ENCODE measurements at regions of chr10 and their contacts with region 1.

Region 1: DNA sequence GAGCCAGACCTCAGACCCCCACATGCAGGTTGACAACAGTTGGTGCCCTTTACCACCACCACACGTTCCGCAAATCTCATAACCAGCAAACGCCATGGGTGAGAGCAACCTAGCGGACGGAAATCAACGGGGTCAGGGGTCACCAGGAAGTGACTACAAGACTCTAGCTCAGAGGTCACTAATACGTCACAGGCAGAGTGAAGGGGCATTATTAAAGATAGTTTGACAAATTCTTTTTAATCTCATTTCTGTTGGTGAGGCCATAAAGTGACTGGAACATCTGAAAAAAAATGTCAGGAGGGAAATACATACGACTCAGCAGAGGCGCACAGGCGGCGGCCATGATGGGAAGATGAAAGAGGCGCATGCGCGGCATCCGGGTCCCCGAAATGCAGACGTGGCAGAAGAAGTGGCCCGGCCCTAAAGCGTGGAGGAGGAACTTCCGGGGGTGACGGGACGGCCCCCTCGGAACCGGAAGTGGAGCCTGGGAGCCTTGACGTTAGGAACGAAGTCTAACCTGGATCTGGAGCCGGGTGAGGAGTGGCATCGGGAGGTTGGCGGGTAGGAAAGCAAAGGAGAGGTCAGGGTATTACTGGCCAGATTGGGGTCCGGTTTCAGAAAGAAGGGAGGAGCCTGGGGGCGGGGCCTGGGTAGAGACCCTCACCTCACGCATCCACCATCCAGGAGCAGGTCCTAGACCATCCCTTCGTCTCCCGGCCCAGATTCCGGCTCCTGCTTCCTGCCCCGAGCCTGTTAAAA is at the start of gene SEC24C:
- DNase-seq: peak; percentile 99
- ATAC-seq: peak; percentile 94
- H3K4me3 ChIP-seq: peak within 1 kb of the TSS; percentile 89 to 99 (median 95)
- H3K4me3 Mint-ChIP-seq: peak within 1 kb of the TSS; percentile 100
- H3K27ac ChIP-seq: peak within 1 kb of the TSS; percentile 88 to 99
- H3K27ac Mint-ChIP-seq: peak within 1 kb of the TSS; percentile 100
- H3K4me1 ChIP-seq: peaks cover 18 to 24% of the 10 kb centered on the region in 2 donors
- H3K4me1 Mint-ChIP-seq: peaks cover 35% of the 10 kb centered on the region
- H3K27me3 ChIP-seq: no peaks in the 10 kb centered on the region
- H3K27me3 Mint-ChIP-seq: no peaks in the 10 kb centered on the region
- CTCF ChIP-seq: no peak
- total RNA-seq, gene SEC24C: 78.7 and 80.5 TPM in 2 replicates

Region 2: DNA sequence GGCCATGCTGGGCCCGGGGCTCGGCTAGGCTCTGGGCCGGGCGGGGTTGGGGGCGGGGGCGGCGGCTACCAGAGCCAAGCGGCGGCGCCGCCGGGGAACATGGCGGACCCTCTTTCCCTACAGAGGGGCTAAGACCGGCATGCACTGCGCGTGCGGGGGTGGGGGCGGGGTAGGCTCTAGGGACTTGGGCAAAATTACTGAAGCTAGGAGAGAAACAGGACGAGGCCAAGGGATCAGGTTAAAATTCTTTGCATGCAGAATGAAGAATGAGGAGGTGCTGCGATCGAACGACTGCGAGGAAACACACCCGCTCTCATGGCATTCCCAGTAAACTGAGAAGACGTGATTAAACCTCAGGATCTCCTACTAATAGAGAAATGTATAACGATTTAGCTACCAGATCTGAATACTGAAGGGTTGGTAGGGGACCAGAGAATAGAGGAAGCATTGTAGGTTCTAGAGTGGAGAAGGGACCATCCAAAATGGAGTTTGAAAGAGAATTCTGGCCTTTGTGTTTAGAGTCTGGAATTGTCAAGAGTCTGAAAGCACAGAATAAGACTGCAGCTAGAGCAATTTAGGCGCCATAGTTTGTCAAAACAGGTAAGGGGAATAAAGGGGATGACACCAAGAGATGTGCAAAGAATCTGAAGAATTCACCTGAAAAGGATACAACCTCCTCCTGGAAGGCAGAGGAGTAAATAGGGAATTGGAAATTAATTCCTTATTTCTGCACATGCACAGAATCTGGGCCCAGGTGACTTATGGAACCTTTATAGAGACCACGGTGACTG is 248.0 kb before region 1 on chr10 and contains the start of gene PPP3CB:
- CTCF ChIA-PET with region 1: no interaction called
- POLR2A ChIA-PET with region 1: no interaction called
- intact Hi-C with region 1: loop called (anchors 1 kb)
- DNase-seq: peak; percentile 94
- ATAC-seq: peak; percentile 70
- H3K4me3 ChIP-seq: peak within 1 kb of the TSS; percentile 63 to 97 (median 85)
- H3K4me3 Mint-ChIP-seq: peak within 1 kb of the TSS; percentile 94
- H3K27ac ChIP-seq: peak within 1 kb of the TSS; percentile 89 to 93
- H3K27ac Mint-ChIP-seq: peak within 1 kb of the TSS; percentile 96
- H3K4me1 ChIP-seq: peaks cover 30 to 40% of the 10 kb centered on the region in 2 donors
- H3K4me1 Mint-ChIP-seq: peaks cover 52% of the 10 kb centered on the region
- H3K27me3 ChIP-seq: no peaks in the 10 kb centered on the region
- H3K27me3 Mint-ChIP-seq: no peaks in the 10 kb centered on the region
- CTCF ChIP-seq: no peak
- total RNA-seq, gene PPP3CB: 51.2 and 52.8 TPM in 2 replicates

Region 3: DNA sequence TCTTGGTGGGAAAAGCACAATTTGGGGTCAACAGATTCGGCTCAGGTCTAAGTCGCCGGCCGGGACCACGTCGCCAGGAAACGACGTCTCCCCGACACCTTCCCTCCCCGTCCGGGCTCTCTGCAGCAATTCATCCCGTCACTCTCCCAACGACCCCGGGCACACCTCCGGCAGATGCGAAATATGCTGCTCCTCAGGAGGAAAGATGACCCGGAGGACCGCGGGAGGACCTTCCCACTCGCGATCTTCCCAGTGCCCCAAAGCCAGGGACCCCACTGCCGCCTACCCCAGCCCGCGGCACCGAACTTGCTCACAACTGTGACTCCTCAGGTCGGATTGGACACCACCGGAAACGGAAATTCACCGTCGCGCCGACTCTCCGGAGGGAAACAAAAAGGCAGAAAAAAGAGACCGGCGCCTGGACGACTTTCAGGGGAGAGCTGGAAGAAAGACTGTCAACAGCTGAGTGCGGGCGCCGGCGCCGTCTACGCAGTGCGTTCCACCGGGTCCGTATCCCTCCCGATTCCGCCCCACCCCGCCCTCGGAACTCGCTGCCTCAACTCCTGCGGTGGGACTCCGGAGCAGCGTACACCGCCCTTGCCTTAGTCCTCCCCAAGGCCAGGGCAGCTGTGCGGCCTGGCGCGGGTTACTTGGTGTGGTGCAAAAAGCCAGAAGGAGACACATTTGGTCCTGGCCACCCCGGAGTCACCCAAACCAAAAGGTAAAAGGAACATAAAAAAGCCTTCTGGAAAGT is 13.8 kb before region 1 on chr10:
- CTCF ChIA-PET with region 1: interaction called, 19 read pairs
- POLR2A ChIA-PET with region 1: interaction called, 31 read pairs
- intact Hi-C with region 1: loop called (anchors 1 kb)
- DNase-seq: peak; percentile 91
- ATAC-seq: peak; percentile 89
- H3K4me3 ChIP-seq: peak overlapping the region; percentile 64 to 90 (median 86)
- H3K4me3 Mint-ChIP-seq: peak overlapping the region; percentile 98
- H3K27ac ChIP-seq: peak overlapping the region; percentile 51 to 86
- H3K27ac Mint-ChIP-seq: peak overlapping the region; percentile 96
- H3K4me1 ChIP-seq: peaks cover 7 to 8% of the 10 kb centered on the region in 2 donors
- H3K4me1 Mint-ChIP-seq: peaks cover 20% of the 10 kb centered on the region
- H3K27me3 ChIP-seq: no peaks in the 10 kb centered on the region
- H3K27me3 Mint-ChIP-seq: no peaks in the 10 kb centered on the region
- CTCF ChIP-seq: no peak

Region 4: DNA sequence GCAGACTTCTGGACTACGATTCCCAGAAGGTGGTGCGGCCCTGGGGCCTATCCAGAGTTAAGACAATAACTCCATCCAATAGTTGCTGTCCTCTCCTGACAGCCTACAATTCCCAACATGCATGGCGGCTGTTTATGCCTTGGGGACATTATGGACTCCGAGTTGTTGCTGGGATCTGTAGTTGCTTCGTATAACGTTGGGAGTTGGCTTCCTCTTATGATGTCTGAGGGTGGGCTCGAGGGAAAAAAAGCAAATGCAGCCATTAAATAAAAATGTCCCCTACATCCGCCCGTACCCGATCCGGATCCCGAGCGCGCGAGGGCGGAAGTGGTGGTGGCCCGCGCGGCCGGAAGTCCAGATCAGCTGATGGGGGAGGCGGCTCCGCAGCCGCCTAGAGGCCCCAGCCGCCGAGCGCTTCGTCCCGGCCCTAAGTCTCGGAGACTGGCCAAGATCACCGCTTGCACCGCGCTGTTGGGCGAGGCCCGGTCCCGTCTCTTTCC is 41.2 kb after region 1 on chr10 and contains the start of gene ZSWIM8:
- CTCF ChIA-PET with region 1: no interaction called
- POLR2A ChIA-PET with region 1: interaction called, 10 read pairs
- intact Hi-C with region 1: loop called (anchors 1 kb)
- DNase-seq: peak; percentile 95
- ATAC-seq: peak; percentile 87
- H3K4me3 ChIP-seq: peak within 1 kb of the TSS; percentile 56 to 97 (median 85)
- H3K4me3 Mint-ChIP-seq: peak within 1 kb of the TSS; percentile 96
- H3K27ac ChIP-seq: peak within 1 kb of the TSS; percentile 53 to 74
- H3K27ac Mint-ChIP-seq: peak within 1 kb of the TSS; percentile 98
- H3K4me1 ChIP-seq: peaks cover 32 to 46% of the 10 kb centered on the region in 2 donors
- H3K4me1 Mint-ChIP-seq: peaks cover 48% of the 10 kb centered on the region
- H3K27me3 ChIP-seq: no peaks in the 10 kb centered on the region
- H3K27me3 Mint-ChIP-seq: no peaks in the 10 kb centered on the region
- CTCF ChIP-seq: no peak
- total RNA-seq, gene ZSWIM8: 110 and 113 TPM in 2 replicates

Measured in B cell (primary cell).